MCF 10A (cell line): ENCODE measurements at regions of chr3 and their contacts with region 1.

Region 1: DNA sequence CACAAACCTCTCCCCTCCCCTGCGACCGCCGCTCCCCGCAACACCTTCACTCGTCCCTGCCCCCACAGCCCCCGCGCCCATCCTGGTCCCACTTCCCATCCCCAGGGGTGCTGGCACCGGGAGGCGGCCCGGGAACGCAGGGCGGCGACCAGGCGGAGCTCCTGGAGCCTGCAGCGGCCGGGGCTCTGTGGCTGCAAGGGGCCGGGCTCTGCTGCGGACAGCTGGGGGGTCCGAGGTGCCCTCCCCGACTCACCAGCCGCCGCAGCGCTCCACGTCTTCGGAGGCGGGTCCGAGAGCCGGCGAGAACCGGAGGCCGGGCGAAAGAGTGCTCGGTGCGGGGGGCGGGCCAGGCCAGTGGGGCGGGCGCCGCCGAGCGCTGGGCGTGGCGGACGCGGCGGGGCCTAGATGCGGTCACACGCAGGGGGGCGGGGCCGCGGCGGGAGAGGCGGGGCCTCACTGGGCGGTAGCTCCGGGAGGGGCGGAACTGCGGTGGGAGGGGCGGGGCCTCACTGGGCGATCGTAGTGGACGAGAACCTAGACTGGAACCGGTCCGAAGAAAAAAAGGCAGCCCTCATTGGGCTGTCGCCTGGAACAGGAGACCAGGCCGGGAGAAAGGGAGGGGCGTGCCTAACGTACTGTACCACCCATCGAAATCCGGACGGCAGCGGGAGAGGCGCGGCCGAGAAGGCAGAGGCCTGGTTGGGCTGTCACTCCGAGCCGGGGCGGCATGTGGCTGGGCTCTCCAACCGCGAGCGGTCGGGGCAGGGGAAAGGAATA is at the start of gene ANO10:
- DNase-seq: peak; percentile 99
- H3K4me3 Mint-ChIP-seq: peak within 1 kb of the TSS; percentile 85
- H3K27ac Mint-ChIP-seq: peak within 1 kb of the TSS; percentile 92
- H3K4me1 Mint-ChIP-seq: peaks cover 8% of the 10 kb centered on the region
- H3K27me3 Mint-ChIP-seq: no peaks in the 10 kb centered on the region
- CTCF ChIP-seq: no peak
- total RNA-seq, gene ANO10: 15.0 and 16.4 TPM in 2 replicates

Region 2: GRCh38 chr3:42979044-42979972 is 642.5 kb before region 1 on chr3 and contains the start of gene GASK1A:
- CTCF ChIA-PET with region 1: no interaction called
- POLR2A ChIA-PET with region 1: no interaction called
- intact Hi-C with region 1: no loop called
- DNase-seq: no peak
- H3K4me3 Mint-ChIP-seq: no peak within 1 kb of the TSS
- H3K27ac Mint-ChIP-seq: no peak within 1 kb of the TSS
- H3K4me1 Mint-ChIP-seq: no peaks in the 10 kb centered on the region
- H3K27me3 Mint-ChIP-seq: peaks cover 40% of the 10 kb centered on the region
- CTCF ChIP-seq: no peak
- total RNA-seq, gene GASK1A: not detected in 2 replicates

Region 3: GRCh38 chr3:43378066-43378935 is 243.5 kb before region 1 on chr3:
- CTCF ChIA-PET with region 1: no interaction called
- POLR2A ChIA-PET with region 1: no interaction called
- intact Hi-C with region 1: no loop called
- DNase-seq: peak; percentile 63
- H3K4me3 Mint-ChIP-seq: no peak overlapping the region
- H3K27ac Mint-ChIP-seq: no peak overlapping the region
- H3K4me1 Mint-ChIP-seq: no peaks in the 10 kb centered on the region
- H3K27me3 Mint-ChIP-seq: no peaks in the 10 kb centered on the region
- CTCF ChIP-seq: peak; percentile 44

Region 4: GRCh38 chr3:43609406-43609805 is 12.4 kb before region 1 on chr3:
- CTCF ChIA-PET with region 1: no interaction called
- POLR2A ChIA-PET with region 1: interaction called, 25 read pairs
- intact Hi-C with region 1: no loop called
- DNase-seq: no peak
- H3K4me3 Mint-ChIP-seq: no peak overlapping the region
- H3K27ac Mint-ChIP-seq: no peak overlapping the region
- H3K4me1 Mint-ChIP-seq: no peaks in the 10 kb centered on the region
- H3K27me3 Mint-ChIP-seq: no peaks in the 10 kb centered on the region
- CTCF ChIP-seq: no peak

Region 5: GRCh38 chr3:43632269-43632733 is 10.5 kb after region 1 on chr3:
- CTCF ChIA-PET with region 1: no interaction called
- POLR2A ChIA-PET with region 1: interaction called, 15 read pairs
- intact Hi-C with region 1: no loop called
- DNase-seq: peak; percentile 88
- H3K4me3 Mint-ChIP-seq: no peak overlapping the region
- H3K27ac Mint-ChIP-seq: peak overlapping the region; percentile 75
- H3K4me1 Mint-ChIP-seq: no peaks in the 10 kb centered on the region
- H3K27me3 Mint-ChIP-seq: no peaks in the 10 kb centered on the region
- CTCF ChIP-seq: no peak

Region 6: GRCh38 chr3:43690400-43691119 is 68.7 kb after region 1 on chr3 and contains the start of gene ABHD5:
- CTCF ChIA-PET with region 1: no interaction called
- POLR2A ChIA-PET with region 1: interaction called, 41 read pairs
- intact Hi-C with region 1: loop called (anchors 2 kb)
- DNase-seq: peak; percentile 93
- H3K4me3 Mint-ChIP-seq: peak within 1 kb of the TSS; percentile 90
- H3K27ac Mint-ChIP-seq: peak within 1 kb of the TSS; percentile 88
- H3K4me1 Mint-ChIP-seq: peaks cover 41% of the 10 kb centered on the region
- H3K27me3 Mint-ChIP-seq: no peaks in the 10 kb centered on the region
- CTCF ChIP-seq: peak; percentile 17
- total RNA-seq, gene ABHD5: 30.3 and 32.6 TPM in 2 replicates

Region 7: GRCh38 chr3:43699864-43700263 is 78.0 kb after region 1 on chr3:
- CTCF ChIA-PET with region 1: no interaction called
- POLR2A ChIA-PET with region 1: interaction called, 12 read pairs
- intact Hi-C with region 1: no loop called
- DNase-seq: peak; percentile 52
- H3K4me3 Mint-ChIP-seq: no peak overlapping the region
- H3K27ac Mint-ChIP-seq: no peak overlapping the region
- H3K4me1 Mint-ChIP-seq: peaks cover 46% of the 10 kb centered on the region
- H3K27me3 Mint-ChIP-seq: no peaks in the 10 kb centered on the region
- CTCF ChIP-seq: peak; percentile 38

Region 8: GRCh38 chr3:43707998-43708397 is 86.2 kb after region 1 on chr3:
- CTCF ChIA-PET with region 1: no interaction called
- POLR2A ChIA-PET with region 1: interaction called, 15 read pairs
- intact Hi-C with region 1: no loop called
- DNase-seq: peak; percentile 95
- H3K4me3 Mint-ChIP-seq: peak overlapping the region; percentile 55
- H3K27ac Mint-ChIP-seq: peak overlapping the region; percentile 81
- H3K4me1 Mint-ChIP-seq: peaks cover 22% of the 10 kb centered on the region
- H3K27me3 Mint-ChIP-seq: no peaks in the 10 kb centered on the region
- CTCF ChIP-seq: no peak